A549 (cell line): ENCODE measurements at regions of chr4 and their contacts with region 1.

Region 1: GRCh38 chr4:68375667-68376559 is 26.0 kb upstream of the YTHDC1 start:
- DNase-seq: peak; percentile 46 to 75
- ATAC-seq: peak; percentile 98 to 99
- H3K4me3 ChIP-seq: peak overlapping the region; percentile 41
- H3K27ac ChIP-seq: no peak overlapping the region
- H3K4me1 ChIP-seq: no peaks in the 10 kb centered on the region
- CTCF ChIP-seq: peak; percentile 75
- EP300 ChIP-seq: no peak
- POLR2A ChIP-seq: no peak
- RAD21 ChIP-seq: peak; percentile 77 to 84

Region 2: DNA sequence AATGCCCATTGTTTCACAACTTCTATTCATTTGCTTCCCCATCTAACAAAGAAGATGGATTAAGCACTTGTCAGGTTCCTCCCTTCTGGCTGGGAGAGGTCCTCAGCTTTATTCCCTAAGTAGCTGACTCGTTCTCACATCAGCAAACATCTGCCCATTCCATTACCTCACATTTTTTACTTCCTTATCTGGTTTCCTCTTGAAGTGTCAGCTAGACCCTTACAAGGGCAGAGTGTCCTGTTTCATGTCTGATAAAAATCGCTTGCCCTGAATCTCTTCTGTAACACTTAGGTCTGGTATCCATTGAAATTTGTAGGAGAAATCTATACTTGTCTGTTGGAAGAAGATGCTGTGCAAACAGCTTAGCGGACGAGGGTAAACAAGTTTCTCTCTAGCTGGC is 447.3 kb before region 1 on chr4:
- CTCF ChIA-PET with region 1: no interaction called
- POLR2A ChIA-PET with region 1: no interaction called
- DNase-seq: peak in 1 of 2 experiments; percentile 5
- ATAC-seq: no peak
- H3K4me3 ChIP-seq: no peak overlapping the region
- H3K27ac ChIP-seq: no peak overlapping the region
- H3K4me1 ChIP-seq: no peaks in the 10 kb centered on the region
- CTCF ChIP-seq: no peak
- EP300 ChIP-seq: no peak
- POLR2A ChIP-seq: no peak
- RAD21 ChIP-seq: no peak

Region 3: DNA sequence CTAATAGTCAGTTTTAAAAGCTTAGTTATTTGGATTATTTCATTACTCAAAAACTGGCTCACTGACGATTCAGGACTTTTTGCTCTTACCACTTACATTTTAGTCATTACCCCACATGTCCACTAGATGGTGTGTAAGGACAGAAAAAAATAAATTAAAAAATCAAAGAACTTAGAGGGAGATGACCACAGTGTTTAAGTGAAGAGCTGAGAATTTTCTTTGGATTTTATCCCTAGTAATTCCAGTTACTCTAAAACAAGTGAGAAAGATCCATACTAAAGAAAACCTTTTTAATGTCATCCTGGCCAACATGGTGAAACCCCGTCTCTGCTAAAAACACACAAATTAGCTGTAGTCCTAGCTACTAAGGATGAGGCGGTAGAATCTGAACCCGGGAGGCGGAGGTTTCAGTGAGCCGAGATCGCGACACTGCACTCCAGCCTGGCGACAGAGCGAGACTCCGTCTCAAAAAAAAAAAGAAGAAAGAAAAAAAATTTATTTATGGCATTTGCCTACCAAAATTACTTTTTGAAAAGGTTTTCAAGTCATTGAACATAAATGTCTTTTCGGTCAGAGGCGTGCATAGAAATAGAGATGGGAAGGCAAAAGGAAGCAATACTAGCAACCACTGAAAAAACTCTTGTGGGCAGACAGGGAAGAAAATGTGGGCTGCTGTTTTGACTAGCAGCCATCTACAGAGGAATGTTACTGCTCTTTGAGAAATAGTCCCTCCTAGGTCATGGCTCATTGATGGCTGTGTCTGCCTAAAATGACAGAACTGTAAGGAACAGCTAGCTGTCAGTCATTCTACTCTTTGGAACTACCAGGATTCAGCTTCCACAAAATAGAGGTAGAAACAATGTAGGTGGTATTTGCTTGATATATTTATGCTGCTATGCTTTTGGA is 103.8 kb before region 1 on chr4:
- CTCF ChIA-PET with region 1: interaction called, 21 read pairs
- POLR2A ChIA-PET with region 1: no interaction called
- DNase-seq: peak; percentile 24 to 51
- ATAC-seq: peak in 1 of 2 experiments; percentile 54; a peak in 2 of 6 replicates
- H3K4me3 ChIP-seq: no peak overlapping the region
- H3K27ac ChIP-seq: no peak overlapping the region
- H3K4me1 ChIP-seq: no peaks in the 10 kb centered on the region
- CTCF ChIP-seq: peak; percentile 54
- EP300 ChIP-seq: no peak
- POLR2A ChIP-seq: no peak
- RAD21 ChIP-seq: peak; percentile 69 to 75

Region 4: GRCh38 chr4:68288393-68288740 is 87.5 kb before region 1 on chr4:
- CTCF ChIA-PET with region 1: no interaction called
- POLR2A ChIA-PET with region 1: no interaction called
- DNase-seq: no peak
- ATAC-seq: no peak
- H3K4me3 ChIP-seq: no peak overlapping the region
- H3K27ac ChIP-seq: no peak overlapping the region
- H3K4me1 ChIP-seq: no peaks in the 10 kb centered on the region
- CTCF ChIP-seq: no peak
- EP300 ChIP-seq: no peak
- POLR2A ChIP-seq: no peak
- RAD21 ChIP-seq: no peak

Region 5: GRCh38 chr4:68342134-68342533 is 33.8 kb before region 1 on chr4:
- CTCF ChIA-PET with region 1: interaction called, 19 read pairs
- POLR2A ChIA-PET with region 1: no interaction called
- DNase-seq: peak; percentile 8 to 28
- ATAC-seq: peak in 1 of 2 experiments; percentile 57; a peak in 3 of 6 replicates
- H3K4me3 ChIP-seq: no peak overlapping the region
- H3K27ac ChIP-seq: no peak overlapping the region
- H3K4me1 ChIP-seq: peaks cover 73% of the 10 kb centered on the region
- CTCF ChIP-seq: no peak
- EP300 ChIP-seq: no peak
- POLR2A ChIP-seq: no peak
- RAD21 ChIP-seq: no peak

Region 6: DNA sequence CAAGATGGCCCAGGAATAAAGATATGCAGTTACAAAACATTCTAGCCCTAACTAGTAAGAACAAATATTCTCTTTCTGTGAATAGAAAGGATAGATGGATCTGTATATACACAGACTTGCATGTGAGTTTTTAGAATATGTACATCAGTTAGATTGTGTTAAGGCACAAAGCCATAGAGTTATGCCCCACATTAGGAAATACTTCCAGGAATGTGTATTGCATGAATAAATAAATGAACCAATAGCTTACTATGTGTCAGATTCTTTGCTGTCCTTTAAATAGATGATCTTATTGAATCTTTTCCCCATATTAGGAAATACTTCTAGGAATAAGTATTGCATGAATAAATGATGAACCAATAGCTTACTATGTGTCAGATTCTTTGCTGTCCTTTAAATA is 25.4 kb after region 1 on chr4:
- CTCF ChIA-PET with region 1: no interaction called
- POLR2A ChIA-PET with region 1: no interaction called
- DNase-seq: no peak
- ATAC-seq: no peak
- H3K4me3 ChIP-seq: no peak overlapping the region
- H3K27ac ChIP-seq: no peak overlapping the region
- H3K4me1 ChIP-seq: no peaks in the 10 kb centered on the region
- CTCF ChIP-seq: no peak
- EP300 ChIP-seq: no peak
- POLR2A ChIP-seq: no peak
- RAD21 ChIP-seq: no peak

Region 7: DNA sequence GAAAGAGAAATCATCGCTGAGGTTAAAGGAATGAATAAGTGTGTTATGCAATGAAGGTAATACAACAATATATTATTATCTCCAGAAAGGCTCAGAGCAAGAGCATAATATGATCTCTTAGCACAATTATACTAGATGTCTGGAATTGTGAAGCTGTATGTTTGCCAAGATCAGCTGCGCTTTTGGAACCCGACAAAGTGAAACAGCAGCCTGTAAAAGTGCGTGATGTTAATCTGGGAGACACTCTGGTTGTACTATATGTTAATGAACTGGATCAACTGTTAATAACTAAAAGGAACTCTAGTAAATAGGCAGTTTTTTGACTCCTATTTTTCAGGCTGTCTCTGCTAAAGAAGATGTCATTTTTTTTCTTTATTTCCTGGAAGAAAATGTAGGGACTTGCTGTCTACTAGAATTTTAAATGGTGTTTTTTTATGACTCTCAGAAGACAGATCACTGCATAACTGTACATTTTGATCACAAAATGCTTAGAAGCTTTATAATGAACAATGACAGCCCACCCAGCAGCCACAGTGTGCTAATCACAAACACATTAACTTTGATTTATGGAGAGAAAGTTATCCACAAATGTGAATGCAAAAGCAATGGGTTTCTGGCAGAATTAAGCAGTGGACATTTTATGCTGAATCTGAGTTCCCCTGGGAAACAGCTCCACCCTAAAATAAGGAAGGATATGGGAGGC is 954.6 kb after region 1 on chr4:
- CTCF ChIA-PET with region 1: no interaction called
- POLR2A ChIA-PET with region 1: no interaction called
- DNase-seq: no peak
- ATAC-seq: no peak
- H3K4me3 ChIP-seq: no peak overlapping the region
- H3K27ac ChIP-seq: no peak overlapping the region
- H3K4me1 ChIP-seq: no peaks in the 10 kb centered on the region
- CTCF ChIP-seq: no peak
- EP300 ChIP-seq: no peak
- POLR2A ChIP-seq: no peak
- RAD21 ChIP-seq: no peak